AG04449 (cell line): ENCODE measurements at regions of chr2 and their contacts with region 1.

Region 1: GRCh38 chr2:20661067-20661980 is 5.6 kb upstream of the GDF7 start:
- DNase-seq: peak; percentile 28
- H3K4me3 ChIP-seq: no peak overlapping the region
- CTCF ChIP-seq: peak; percentile 90

Region 2: DNA sequence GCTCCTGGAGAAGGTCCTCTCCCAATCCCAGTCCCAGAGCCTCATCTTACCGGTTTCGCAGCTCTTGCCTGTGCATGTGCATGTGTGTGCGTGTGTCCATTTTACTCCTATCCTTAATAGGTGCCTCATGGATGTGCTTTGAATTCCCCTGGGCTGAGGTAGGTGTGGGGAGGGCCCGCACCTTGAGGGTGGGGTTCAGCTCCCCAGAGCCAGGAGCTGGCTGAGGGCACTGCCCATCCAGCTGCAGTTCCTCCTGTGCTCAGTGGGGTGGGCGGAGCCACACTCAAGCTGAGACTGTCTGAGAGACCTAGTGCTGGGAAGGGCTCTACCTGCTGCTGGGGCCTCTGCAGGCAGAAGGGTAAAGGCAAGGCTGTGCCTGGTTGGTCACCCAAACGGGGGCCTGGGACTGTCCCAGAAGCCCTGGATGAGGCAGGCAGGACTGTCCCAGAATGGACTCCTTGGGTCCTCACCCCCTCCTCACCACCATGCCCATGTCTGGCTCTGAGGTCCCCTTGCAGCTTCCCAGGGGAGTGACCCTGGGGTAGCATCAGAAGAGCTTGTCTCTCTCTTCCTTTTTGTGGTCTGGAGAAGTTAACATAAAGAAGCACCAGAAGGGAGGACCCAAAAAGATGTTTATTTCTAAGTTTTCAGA is 14.5 kb after region 1 on chr2:
- CTCF ChIA-PET with region 1: interaction called, 108 read pairs
- POLR2A ChIA-PET with region 1: no interaction called
- DNase-seq: no peak
- H3K4me3 ChIP-seq: no peak overlapping the region
- CTCF ChIP-seq: no peak

Region 3: GRCh38 chr2:20745924-20746555 is 84.7 kb after region 1 on chr2:
- CTCF ChIA-PET with region 1: interaction called, 10 read pairs
- POLR2A ChIA-PET with region 1: no interaction called
- DNase-seq: no peak
- H3K4me3 ChIP-seq: no peak overlapping the region
- CTCF ChIP-seq: no peak

Region 4: DNA sequence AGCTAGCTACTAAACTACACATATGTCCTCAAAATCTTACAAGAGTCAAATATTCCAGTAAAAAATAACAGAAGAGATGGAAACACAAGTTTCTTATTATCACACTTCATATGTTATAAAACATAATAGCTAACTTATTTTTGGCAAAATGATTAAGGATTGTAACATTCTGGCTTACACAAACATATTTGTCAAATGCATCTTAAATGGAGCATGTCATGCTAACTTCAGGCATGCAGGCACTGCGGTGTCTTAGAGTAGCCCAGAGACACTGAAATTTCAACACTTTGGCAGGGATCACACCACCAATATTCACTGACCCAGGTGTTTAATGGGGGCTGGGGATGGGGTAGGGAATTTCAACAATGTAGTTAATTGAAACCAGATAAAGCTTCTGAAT is 110.0 kb after region 1 on chr2:
- CTCF ChIA-PET with region 1: interaction called, 10 read pairs
- POLR2A ChIA-PET with region 1: no interaction called
- DNase-seq: no peak
- H3K4me3 ChIP-seq: no peak overlapping the region
- CTCF ChIP-seq: no peak

Region 5: GRCh38 chr2:20916604-20917286 is 255.4 kb after region 1 on chr2:
- CTCF ChIA-PET with region 1: interaction called, 17 read pairs
- POLR2A ChIA-PET with region 1: no interaction called
- DNase-seq: no peak
- H3K4me3 ChIP-seq: no peak overlapping the region
- CTCF ChIP-seq: no peak

Region 6: GRCh38 chr2:20970068-20970467 is 308.7 kb after region 1 on chr2:
- CTCF ChIA-PET with region 1: interaction called, 382 read pairs
- POLR2A ChIA-PET with region 1: no interaction called
- DNase-seq: no peak
- H3K4me3 ChIP-seq: no peak overlapping the region
- CTCF ChIP-seq: no peak